ENCODE measurements at regions of chr10 and their contacts with region 1.

Region 1: GRCh38 chr10:5948999-5949759 is 28.2 kb downstream of the IL15RA start:
- DNase-seq: no peak
- H3K4me3 ChIP-seq: no peak overlapping the region
- H3K27ac ChIP-seq: no peak overlapping the region
- H3K4me1 ChIP-seq: no peaks in the 10 kb centered on the region
- H3K27me3 ChIP-seq: no peaks in the 10 kb centered on the region
- CTCF ChIP-seq: peak in 3 of 4 experiments; percentile 11 to 46 (median 32)
- POLR2A ChIP-seq: no peak

Region 2: DNA sequence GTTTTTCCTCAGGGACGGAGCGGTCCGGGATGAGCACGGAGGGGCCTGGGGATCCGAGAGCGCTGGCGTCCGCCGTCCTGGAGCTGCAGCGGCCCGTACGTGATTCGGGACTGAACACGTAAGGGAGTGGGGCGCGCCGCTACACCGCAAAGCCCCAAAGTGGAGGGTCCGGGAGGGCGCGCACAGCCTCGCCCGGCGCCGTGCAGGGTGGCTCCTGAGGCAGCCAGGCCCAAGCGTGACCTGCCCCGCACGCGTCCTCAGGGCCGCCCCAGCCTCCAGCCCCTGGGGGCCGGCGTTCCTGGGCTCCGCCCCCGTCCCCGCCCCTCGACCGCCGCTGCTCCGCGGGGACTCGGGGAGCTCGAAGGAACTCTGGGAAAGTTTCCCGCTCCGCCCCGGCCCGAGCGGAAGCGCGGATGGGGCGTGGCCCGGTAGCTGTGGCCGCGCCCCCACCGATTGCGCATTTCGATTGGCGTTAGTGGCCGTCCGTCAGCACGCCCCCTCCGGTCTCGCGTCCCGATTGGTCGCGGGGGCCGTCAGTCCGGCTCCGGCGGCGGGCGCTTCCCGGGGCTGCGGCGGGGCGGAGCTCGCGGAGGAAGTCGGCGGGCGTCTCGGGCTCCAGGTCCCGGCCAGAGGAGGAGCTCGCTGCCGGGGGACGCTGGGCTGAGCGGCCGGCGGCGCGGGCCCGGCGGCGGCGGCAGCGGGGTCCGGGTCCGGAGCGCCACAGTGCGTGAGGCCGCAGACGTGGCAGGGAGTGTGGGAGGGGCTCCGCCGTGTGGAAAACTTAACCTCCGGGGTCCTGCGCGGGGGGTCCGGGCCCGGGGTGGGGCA is 59.3 kb before region 1 on chr10 and contains the starts of genes ANKRD16 and FBH1:
- intact Hi-C with region 1: loop called (anchors 2 kb)
- DNase-seq: peak; percentile 99
- H3K4me3 ChIP-seq: peak within 1 kb of the TSS; percentile 85 to 94
- H3K27ac ChIP-seq: peak within 1 kb of the TSS; percentile 73 to 75
- H3K4me1 ChIP-seq: peaks cover 7% of the 10 kb centered on the region
- H3K27me3 ChIP-seq: no peaks in the 10 kb centered on the region
- CTCF ChIP-seq: peak in 1 of 4 experiments; percentile 39
- POLR2A ChIP-seq: peak; percentile 69
- total RNA-seq, gene ANKRD16: 14.4 to 20.1 TPM
- total RNA-seq, gene FBH1: 75.0 to 172 TPM

Region 3: DNA sequence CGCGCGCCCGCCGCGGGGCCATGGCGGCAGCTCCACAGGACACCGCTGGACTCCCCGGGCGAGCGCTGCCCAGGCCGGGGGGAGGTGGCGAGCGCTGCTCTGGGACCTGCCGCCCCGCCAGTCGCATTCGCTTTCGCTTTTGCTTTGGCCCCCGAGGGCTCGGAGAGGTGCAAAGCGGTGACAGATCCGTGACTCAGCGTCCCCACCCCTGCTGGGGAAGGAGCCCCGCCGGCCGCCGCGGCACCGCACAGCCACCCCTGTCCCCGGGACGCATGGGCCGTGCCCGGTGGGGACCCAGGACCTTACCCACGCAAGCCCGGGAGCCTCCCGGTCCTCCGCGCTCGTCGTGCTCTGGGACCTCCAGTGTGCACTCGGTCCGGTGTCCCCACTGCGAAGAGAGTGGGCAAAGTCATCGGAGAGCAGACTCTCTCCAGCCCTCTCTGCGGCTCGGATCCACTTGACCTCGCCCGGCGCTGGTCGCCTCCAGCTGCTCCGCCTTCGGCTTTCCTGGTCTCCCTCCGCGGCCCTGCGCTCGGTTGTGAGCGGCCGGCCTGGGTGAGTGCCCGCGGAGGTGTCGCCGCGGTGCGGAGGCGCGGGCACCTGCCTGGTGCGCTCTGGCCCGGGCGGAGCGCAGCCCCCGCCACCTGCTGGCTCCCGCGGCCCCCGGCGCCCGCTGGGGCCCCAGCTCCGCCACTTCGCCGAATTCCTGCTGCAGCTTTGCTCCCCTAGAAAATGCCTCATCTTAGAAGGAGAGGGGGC is 28.5 kb after region 1 on chr10 and contains the start of gene IL15RA:
- intact Hi-C with region 1: loop called (anchors 5 kb)
- DNase-seq: peak; percentile 53
- H3K4me3 ChIP-seq: peak within 1 kb of the TSS; percentile 84 to 88
- H3K27ac ChIP-seq: peak within 1 kb of the TSS; percentile 90 to 96
- H3K4me1 ChIP-seq: no peaks in the 10 kb centered on the region
- H3K27me3 ChIP-seq: no peaks in the 10 kb centered on the region
- CTCF ChIP-seq: peak in 3 of 4 experiments; percentile 16 to 56 (median 32)
- POLR2A ChIP-seq: peak; percentile 55
- total RNA-seq, gene IL15RA: 11.7 to 18.5 TPM

Region 4: DNA sequence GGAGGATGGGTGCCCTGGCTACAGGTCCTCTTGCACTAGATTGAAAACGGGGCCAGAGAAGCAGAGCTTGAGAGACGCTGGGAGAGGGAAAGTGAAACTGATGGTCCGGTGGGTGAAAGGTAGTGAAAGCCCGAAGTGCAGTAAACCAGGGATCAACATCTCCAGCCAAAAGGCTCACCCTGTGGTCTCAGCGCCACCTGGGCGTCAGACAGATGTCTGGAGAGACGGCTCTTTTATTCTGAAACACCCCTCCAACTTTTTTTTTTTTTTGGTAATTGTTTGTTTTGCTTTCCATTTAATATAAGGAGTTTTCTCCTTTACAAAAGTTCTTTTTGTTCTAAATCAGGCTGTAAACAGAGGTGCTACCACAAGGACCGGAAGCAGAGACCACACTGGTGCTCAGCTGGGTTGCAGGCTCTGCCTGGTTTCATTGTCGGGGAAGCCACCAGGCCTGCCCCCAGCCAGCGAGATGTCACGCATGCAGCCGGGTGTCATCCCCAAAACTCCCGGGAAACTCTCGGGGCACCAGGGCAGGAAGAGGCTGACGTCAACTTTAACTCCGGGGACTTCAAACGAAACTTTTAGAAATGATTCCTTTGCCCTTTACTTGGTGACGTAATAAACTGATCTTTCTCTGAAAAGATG is 101.7 kb after region 1 on chr10:
- intact Hi-C with region 1: no loop called
- DNase-seq: peak; percentile 61
- H3K4me3 ChIP-seq: peak overlapping the region; percentile 16 to 25
- H3K27ac ChIP-seq: peak overlapping the region; percentile 53 to 63
- H3K4me1 ChIP-seq: no peaks in the 10 kb centered on the region
- H3K27me3 ChIP-seq: no peaks in the 10 kb centered on the region
- CTCF ChIP-seq: peak; percentile 13 to 47 (median 36)
- POLR2A ChIP-seq: no peak

Region 5: DNA sequence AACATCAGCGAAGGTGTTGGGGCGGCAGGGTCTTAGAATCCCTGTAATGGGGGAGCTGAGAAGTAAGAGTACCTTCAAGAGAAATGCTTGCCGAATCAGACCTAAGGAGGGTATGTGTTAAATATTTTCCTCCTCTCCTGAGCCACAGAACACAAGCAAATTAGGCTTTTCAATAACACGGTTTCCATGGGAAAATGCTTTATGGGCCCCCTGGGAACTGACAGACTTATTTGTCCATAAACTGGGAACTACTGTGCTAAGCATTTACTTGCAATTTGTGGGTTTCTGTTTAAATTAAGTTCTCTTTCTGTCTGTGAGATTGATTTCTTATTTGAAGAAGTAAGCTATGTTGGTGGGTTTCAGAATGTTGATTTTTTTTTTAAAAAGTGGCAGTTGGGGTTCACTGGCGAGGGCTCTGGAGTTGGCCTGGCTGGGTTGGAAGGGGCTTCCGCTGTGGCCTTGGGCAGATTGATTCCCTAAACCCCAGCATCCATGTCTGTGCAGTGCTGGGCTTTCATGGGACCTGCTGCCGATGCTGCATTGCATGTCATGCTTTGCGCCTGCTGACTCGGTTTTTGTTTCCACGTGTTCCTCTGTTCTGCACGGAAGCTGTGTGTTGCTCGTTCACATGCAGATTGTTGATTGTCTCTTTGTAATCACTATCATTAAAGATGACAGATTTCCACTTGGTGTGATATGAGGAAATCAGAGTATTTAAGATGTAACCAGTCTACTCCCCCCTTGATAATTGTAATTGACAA is 146.8 kb after region 1 on chr10:
- intact Hi-C with region 1: no loop called
- DNase-seq: no peak
- H3K4me3 ChIP-seq: no peak overlapping the region
- H3K27ac ChIP-seq: no peak overlapping the region
- H3K4me1 ChIP-seq: no peaks in the 10 kb centered on the region
- H3K27me3 ChIP-seq: no peaks in the 10 kb centered on the region
- CTCF ChIP-seq: no peak
- POLR2A ChIP-seq: no peak

Measured in prostate gland (tissue), 2 donors.